AG04449 (cell line): ENCODE measurements at regions of chr2 and their contacts with region 1.

Region 1: GRCh38 chr2:181742922-181743722 is 62.8 kb upstream of the NEUROD1 start:
- DNase-seq: no peak
- H3K4me3 ChIP-seq: no peak overlapping the region
- CTCF ChIP-seq: peak; percentile 37

Region 2: GRCh38 chr2:181715033-181715630 is 28.0 kb before region 1 on chr2:
- CTCF ChIA-PET with region 1: interaction called, 10 read pairs
- POLR2A ChIA-PET with region 1: no interaction called
- DNase-seq: peak; percentile 41
- H3K4me3 ChIP-seq: no peak overlapping the region
- CTCF ChIP-seq: peak; percentile 60

Region 3: GRCh38 chr2:181790716-181791649 is 47.9 kb after region 1 on chr2:
- CTCF ChIA-PET with region 1: interaction called, 10 read pairs
- POLR2A ChIA-PET with region 1: no interaction called
- DNase-seq: peak; percentile 91
- H3K4me3 ChIP-seq: no peak overlapping the region
- CTCF ChIP-seq: no peak

Region 4: DNA sequence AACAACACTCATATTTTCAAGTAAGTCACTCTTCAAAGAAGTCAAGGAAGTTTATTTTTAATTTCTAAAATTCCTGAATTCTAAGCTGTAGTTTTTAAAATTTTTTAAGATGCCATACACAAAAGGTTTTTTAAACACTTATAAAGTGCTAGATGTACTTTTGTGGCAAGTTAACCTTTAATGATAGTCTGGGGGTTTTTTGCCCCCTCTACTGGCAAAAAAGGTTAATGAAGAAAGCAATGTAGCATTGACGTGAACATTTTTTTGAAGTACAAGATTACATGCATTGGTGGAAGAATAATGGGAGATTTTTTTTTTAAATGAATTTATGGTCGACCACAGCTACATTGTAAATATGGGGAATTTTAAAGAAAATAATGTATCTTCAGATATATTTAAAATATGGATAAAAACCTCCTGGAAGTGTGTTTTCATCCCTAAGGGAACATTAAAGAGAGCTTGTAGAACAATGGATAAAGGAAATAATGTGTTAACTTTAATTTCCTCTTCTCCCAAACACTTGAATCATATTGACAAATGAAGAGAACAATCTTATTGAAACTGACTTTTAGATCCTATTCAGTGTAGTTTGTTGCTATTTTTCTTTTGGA is 161.0 kb after region 1 on chr2:
- CTCF ChIA-PET with region 1: interaction called, 136 read pairs
- POLR2A ChIA-PET with region 1: no interaction called
- DNase-seq: no peak
- H3K4me3 ChIP-seq: no peak overlapping the region
- CTCF ChIP-seq: no peak

Region 5: DNA sequence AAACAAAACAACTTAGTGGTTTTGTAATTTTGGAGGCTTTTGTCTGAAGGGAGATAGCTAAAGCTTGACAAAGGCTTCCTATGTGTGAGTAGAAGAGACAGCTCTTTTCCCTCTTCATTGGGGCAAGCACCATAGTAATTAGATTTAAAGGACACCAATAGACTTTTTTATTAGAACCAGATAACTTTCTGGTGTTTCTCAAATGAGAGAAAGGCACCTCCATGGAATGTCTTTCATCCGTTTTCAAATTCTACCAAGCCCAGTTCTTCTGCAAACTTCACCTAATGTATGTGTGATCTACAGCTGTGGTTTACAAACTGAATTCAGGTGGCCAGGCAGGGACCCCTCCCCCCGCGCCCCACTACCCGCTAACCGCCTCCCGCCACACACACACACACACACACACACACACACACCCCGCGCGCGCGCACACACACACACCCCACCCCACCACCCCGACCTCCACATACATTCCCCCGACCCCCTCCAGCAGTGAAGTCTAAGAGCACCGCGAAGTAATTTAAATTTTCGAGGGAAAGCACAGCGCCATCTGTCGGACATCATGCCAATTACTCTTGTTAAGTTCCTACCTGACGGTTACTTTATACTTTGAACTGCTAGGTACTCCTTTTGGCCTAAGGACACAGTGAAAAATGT is 210.9 kb after region 1 on chr2:
- CTCF ChIA-PET with region 1: interaction called, 12 read pairs
- POLR2A ChIA-PET with region 1: no interaction called
- DNase-seq: no peak
- H3K4me3 ChIP-seq: peak overlapping the region; percentile 29
- CTCF ChIP-seq: peak; percentile 63